Activated CD4-positive, alpha-beta T cell treated with anti-CD3 and anti-CD28 coated beads, Interleukin-2, amount 10 ng/mL, durations not matched to agents 7 days and 5 days (primary cell): ENCODE measurements at regions of chr2 and their contacts with region 1.

Region 1: GRCh38 chr2:30239308-30239985 is 8.1 kb downstream of the LBH start:
- DNase-seq: peak; percentile 61
- H3K4me3 Mint-ChIP-seq: no peak overlapping the region
- H3K27ac Mint-ChIP-seq: peak overlapping the region; percentile 31
- H3K4me1 Mint-ChIP-seq: peaks cover 88% of the 10 kb centered on the region
- H3K27me3 Mint-ChIP-seq: no peaks in the 10 kb centered on the region

Region 2: GRCh38 chr2:30178618-30179434 is 60.6 kb before region 1 on chr2:
- CTCF ChIA-PET with region 1: no interaction called
- POLR2A ChIA-PET with region 1: no interaction called
- DNase-seq: no peak
- H3K4me3 Mint-ChIP-seq: no peak overlapping the region
- H3K27ac Mint-ChIP-seq: no peak overlapping the region
- H3K4me1 Mint-ChIP-seq: peaks cover 2% of the 10 kb centered on the region
- H3K27me3 Mint-ChIP-seq: no peaks in the 10 kb centered on the region

Region 3: DNA sequence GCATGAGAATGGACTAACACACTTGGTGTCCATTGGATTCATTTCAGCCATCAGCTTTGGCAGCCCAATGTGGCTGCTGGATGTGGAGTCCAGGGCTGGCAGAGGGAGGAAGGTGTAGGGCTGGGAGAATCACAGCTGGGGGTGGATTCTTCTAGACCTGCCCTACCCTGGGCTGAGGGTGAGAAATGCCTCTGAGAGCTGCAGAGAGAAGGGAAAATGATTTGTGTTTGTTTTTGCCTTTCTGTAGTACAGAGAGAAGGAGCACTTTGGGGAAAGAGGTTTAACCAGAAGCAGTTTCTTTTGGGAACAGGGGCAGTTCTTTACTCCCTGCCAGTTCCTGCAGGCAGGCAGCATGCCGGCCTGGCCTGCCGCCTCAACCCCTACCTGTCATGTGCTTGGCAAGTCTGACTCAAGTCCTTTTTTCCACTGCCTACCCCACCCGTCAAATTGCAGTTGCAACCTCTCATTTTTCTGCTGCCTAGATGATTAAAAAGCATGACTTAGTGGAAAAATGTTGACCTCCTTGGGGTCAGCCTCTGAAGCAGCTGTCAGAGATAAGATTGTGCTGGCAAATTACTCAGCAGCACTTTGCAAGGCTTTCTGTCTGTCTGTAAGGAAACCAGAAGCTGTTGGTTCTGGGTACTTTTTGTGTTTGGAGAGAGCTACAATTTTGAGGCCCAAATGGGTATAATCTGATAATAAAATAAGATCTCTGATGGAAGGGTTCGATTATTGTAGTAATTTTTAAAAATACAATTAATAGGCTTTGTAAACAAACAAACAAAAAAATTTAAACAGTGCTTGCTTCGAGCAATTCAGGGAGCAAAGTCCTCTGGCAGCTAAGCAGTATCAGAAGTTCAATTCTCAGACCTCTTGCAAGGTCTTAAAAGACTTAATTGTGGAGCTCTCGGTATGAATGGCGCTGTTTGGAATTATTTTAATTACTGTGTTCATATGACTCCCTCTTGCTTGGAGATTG is 13.6 kb after region 1 on chr2:
- CTCF ChIA-PET with region 1: interaction called, 18 read pairs
- POLR2A ChIA-PET with region 1: no interaction called
- DNase-seq: peak; percentile 41
- H3K4me3 Mint-ChIP-seq: no peak overlapping the region
- H3K27ac Mint-ChIP-seq: peak overlapping the region; percentile 70
- H3K4me1 Mint-ChIP-seq: peaks cover 78% of the 10 kb centered on the region
- H3K27me3 Mint-ChIP-seq: no peaks in the 10 kb centered on the region

Region 4: GRCh38 chr2:30266051-30266621 is 26.7 kb after region 1 on chr2:
- CTCF ChIA-PET with region 1: interaction called, 14 read pairs
- POLR2A ChIA-PET with region 1: no interaction called
- DNase-seq: peak; percentile 71
- H3K4me3 Mint-ChIP-seq: peak overlapping the region; percentile 71
- H3K27ac Mint-ChIP-seq: peak overlapping the region; percentile 97
- H3K4me1 Mint-ChIP-seq: peaks cover 77% of the 10 kb centered on the region
- H3K27me3 Mint-ChIP-seq: no peaks in the 10 kb centered on the region